ENCODE measurements at regions of chr9 and their contacts with region 1.

Region 1: DNA sequence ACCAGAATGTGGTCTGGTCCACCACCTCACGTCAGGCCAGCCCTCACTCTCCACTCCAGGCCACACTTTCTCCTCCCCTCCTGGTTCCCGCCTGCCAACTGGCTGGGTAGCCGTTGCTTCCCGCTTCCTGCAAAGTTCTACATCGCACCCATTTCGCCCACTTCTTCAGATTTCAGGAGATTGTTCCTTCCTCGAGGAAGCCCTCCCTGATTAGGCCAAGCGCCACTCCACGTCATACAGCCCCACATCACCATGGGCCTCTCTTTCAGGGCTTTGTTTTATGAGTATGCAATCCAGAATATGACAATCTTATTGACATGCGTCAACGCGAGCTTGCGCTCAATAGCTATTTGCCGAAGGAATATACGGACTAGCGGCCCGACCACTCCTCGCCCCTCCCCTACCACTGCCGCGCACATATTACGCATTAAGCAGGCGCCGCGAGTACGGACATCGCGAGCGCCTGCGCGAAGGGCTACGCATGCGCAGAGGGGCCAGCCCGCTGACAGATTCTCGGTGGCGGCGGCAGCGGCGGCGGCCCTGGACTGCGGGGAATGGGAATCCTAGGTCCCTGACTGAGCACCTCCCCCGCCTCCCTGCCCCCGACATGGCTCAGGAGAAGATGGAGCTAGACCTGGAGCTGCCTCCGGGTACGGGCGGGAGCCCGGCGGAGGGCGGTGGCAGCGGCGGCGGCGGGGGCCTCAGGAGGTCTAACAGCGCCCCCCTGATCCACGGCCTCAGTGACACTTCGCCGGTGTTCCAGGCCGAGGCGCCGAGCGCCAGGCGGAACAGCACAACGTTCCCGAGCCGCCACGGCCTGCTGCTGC is 74.7 kb downstream of the PIP5K1B start:
- DNase-seq: peak; percentile 96
- ATAC-seq: peak; percentile 92 to 98 (median 96)
- H3K4me3 ChIP-seq: peak overlapping the region; percentile 47 to 79 (median 73)
- H3K27ac ChIP-seq: peak overlapping the region; percentile 84 to 97 (median 92)
- H3K4me1 ChIP-seq: peaks cover 9 to 80% (median 58%) of the 10 kb centered on the region in 9 donors
- H3K27me3 ChIP-seq: no peaks in the 10 kb centered on the region
- CTCF ChIP-seq: peak in 7 of 9 donors; percentile 16 to 67 (median 56)

Region 2: DNA sequence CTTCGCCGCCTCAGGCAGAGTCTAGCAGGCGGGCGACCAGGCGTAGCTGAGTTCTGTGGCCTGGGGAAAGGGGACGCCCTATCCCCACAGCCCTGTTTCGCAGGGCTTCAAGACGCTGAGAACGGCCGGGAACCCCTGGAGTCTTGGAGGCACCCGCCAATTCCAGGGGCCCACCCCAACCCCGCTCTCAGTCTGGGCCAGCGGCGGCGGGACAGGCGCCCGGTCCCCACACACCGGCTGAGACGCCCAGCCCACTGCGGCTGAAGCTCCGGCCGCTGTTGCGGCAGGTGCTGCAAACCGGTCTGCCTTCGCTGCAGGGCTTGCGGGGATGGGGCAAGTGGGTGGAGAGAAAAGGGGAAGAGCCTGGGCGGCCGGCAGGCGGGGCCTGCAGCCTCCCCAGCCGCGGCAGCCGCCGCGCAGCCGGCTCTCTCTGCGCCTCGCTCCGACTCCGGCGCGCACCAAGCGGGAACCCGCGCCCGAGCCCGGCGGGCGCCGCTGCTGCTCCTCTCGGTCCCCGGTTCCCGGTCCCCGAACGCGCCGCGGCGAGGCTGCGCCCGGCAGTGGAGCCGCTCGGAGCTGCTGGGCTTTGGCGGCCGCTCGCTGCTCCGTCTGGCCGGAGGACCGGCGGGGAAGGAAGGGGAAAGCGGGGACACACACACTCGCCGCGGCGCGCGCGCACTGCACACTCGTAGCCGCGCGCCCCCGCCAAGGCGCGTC is 74.8 kb before region 1 on chr9 and contains the start of gene PIP5K1B:
- intact Hi-C with region 1: loop called in 5 of 10 experiments (anchors 5 to 10 kb)
- DNase-seq: peak; percentile 66 to 76
- ATAC-seq: peak; percentile 82 to 92 (median 86)
- H3K4me3 ChIP-seq: peak within 1 kb of the TSS; percentile 29 to 79 (median 64)
- H3K27ac ChIP-seq: peak within 1 kb of the TSS; percentile 81 to 93 (median 88)
- H3K4me1 ChIP-seq: peaks cover 0 to 32% (median 8%) of the 10 kb centered on the region in 9 donors
- H3K27me3 ChIP-seq: peaks cover 0 to 50% (median 14%) of the 10 kb centered on the region in 7 donors
- CTCF ChIP-seq: peak in 3 of 9 donors; percentile 7 to 36 (median 13)
- total RNA-seq, gene PIP5K1B: 32.2 to 90.8 (median 49.7) TPM

Region 3: GRCh38 chr9:68739621-68740174 is 40.1 kb before region 1 on chr9:
- intact Hi-C with region 1: no loop called
- DNase-seq: no peak
- ATAC-seq: peak; percentile 13 to 59 (median 46)
- H3K4me3 ChIP-seq: no peak overlapping the region
- H3K27ac ChIP-seq: peak overlapping the region; percentile 22 to 83 (median 68)
- H3K4me1 ChIP-seq: peaks cover 0 to 55% (median 35%) of the 10 kb centered on the region in 9 donors
- H3K27me3 ChIP-seq: no peaks in the 10 kb centered on the region
- CTCF ChIP-seq: no peak

Region 4: DNA sequence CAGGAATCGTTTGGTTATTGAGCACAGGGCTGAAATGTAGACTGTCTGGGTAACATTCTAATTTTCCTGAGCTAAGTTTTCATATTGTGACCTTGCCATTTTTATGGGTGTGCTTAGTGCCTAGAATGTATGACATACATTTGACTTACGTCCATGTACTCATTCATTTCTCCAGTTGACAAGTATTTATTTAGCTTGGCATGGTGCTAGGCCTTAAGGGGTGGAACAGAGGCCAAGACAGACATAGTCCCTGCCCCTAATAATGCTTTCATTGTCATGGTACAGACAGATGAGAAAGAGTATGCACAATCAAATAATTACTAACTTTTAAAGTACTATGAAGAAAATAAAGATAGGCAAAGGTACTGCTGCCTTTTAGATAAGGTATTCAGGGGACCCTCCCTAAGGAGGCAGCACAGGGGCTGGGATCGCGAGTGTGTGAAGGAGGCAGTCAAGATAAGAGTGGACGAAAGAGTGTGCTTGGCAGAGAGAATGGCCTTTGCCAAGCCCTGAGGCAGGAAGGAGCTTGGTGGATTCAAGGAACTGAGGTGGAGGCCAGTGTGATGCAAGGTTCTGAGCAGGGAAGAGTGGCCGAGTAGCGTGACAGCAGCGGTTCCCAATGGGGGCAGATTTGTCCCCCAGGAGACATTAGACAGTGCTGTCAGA is 53.2 kb after region 1 on chr9:
- intact Hi-C with region 1: loop called in 2 of 10 experiments (anchors 5 to 10 kb)
- DNase-seq: no peak
- ATAC-seq: peak in 2 of 8 donors; percentile 19 to 51
- H3K4me3 ChIP-seq: no peak overlapping the region
- H3K27ac ChIP-seq: peak overlapping the region in 3 of 10 donors; percentile 11 to 46 (median 14)
- H3K4me1 ChIP-seq: peaks cover 0 to 51% (median 20%) of the 10 kb centered on the region in 9 donors
- H3K27me3 ChIP-seq: no peaks in the 10 kb centered on the region
- CTCF ChIP-seq: no peak

Region 5: GRCh38 chr9:68844631-68845612 is 65.2 kb after region 1 on chr9:
- intact Hi-C with region 1: loop called in 1 of 10 experiments (anchors 10 kb)
- DNase-seq: peak; percentile 32 to 53
- ATAC-seq: peak in 7 of 8 donors; percentile 45 to 67 (median 55)
- H3K4me3 ChIP-seq: peak overlapping the region in 1 of 10 donors; percentile 28
- H3K27ac ChIP-seq: peak overlapping the region in 2 of 10 donors; percentile 15 to 68
- H3K4me1 ChIP-seq: peaks cover 0 to 46% (median 16%) of the 10 kb centered on the region in 9 donors
- H3K27me3 ChIP-seq: no peaks in the 10 kb centered on the region
- CTCF ChIP-seq: peak in 8 of 9 donors; percentile 40 to 67 (median 58)

Region 6: DNA sequence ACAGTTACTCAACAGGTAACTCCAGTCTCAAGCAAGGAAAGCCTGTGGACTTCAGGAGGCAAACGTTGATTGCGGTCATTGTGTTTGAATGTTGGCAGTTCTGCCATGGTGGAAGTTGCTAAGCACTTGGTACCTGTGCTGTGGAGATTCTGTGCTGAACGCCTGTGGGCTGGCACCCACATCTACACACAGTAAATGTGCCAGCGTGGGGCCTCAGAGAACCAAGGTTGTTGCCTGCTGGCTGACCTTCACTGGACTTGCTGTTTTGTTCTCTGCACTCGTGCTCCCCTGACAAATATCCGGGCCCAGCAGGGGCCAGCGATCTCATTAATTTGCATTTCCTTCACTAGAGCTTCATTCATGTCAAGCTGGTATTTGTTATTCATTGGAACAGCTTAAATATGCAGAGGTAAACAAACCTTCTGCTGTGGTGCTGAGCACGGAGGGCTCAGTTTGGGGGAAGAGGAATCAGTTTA is 92.3 kb after region 1 on chr9:
- intact Hi-C with region 1: loop called in 1 of 10 experiments (anchors 10 kb)
- DNase-seq: peak; percentile 48 to 56
- ATAC-seq: peak; percentile 76 to 96 (median 86)
- H3K4me3 ChIP-seq: no peak overlapping the region
- H3K27ac ChIP-seq: peak overlapping the region; percentile 28 to 86 (median 74)
- H3K4me1 ChIP-seq: peaks cover 0 to 50% (median 23%) of the 10 kb centered on the region in 9 donors
- H3K27me3 ChIP-seq: no peaks in the 10 kb centered on the region
- CTCF ChIP-seq: no peak

Region 7: DNA sequence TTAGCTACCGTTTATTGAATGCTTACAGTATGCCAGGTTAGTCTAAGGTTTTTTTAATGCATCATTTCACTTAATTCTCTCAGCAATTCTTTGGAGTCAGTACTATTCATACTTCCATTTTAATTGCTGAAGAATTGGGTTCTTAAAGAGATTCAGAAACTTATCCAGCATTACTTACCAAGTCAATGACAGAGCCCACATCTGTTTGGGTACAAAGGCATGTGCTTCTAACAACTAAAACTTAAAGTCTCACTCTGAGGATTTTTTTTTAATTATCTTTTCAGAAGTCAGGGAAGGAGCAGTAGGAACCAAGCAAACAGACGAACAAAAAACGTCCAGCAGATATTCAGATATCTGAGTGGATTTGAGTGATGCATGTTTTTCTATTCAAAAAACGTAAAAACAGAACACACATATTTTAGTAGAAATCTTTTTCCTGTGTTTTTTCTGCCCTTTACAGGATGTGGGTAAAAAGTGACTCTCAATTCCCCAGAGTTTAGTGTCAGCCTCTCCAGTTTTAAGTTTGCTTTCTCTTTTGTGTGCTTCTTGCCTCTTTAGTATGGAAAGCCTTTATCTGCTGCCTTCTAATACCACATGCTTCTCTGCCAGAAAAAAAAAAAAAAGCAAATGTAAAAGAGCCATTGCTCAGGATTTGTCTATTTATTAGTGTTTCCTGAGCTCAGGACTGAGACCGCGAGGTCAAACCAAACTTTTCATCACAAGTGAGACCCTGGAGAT is 116.1 kb after region 1 on chr9:
- intact Hi-C with region 1: loop called in 1 of 10 experiments (anchors 10 kb)
- DNase-seq: no peak
- ATAC-seq: peak in 7 of 8 donors; percentile 60 to 80 (median 63)
- H3K4me3 ChIP-seq: peak overlapping the region in 4 of 10 donors; percentile 4 to 26 (median 10)
- H3K27ac ChIP-seq: peak overlapping the region in 9 of 10 donors; percentile 13 to 67 (median 49)
- H3K4me1 ChIP-seq: peaks cover 0 to 61% (median 32%) of the 10 kb centered on the region in 9 donors
- H3K27me3 ChIP-seq: no peaks in the 10 kb centered on the region
- CTCF ChIP-seq: no peak

Region 8: DNA sequence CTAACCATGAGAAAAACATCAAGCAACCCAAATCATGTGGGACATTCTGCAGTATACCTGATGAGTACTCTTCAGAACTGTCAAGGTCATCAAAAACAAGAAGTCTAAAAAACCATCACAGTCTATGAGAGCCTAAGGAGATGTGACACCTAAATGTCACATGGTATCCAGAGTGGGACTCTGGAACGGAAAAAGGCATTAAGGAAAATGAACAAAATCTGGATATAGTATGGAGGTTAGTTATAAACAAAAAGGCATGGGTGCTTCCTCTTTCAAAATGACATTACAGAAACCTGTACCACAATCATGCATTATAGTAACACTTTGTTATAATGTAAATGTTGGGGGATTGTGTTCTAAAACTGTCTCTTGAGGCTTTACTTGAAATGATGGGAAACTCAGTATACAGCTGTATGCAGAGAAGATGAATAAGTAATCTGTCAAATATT is 186.7 kb after region 1 on chr9:
- intact Hi-C with region 1: no loop called
- DNase-seq: no peak
- ATAC-seq: no peak
- H3K4me3 ChIP-seq: no peak overlapping the region
- H3K27ac ChIP-seq: peak overlapping the region in 3 of 10 donors; percentile 0 to 8 (median 3)
- H3K4me1 ChIP-seq: peaks cover 0 to 64% (median 12%) of the 10 kb centered on the region in 9 donors
- H3K27me3 ChIP-seq: no peaks in the 10 kb centered on the region
- CTCF ChIP-seq: no peak